Activated CD4-positive, alpha-beta T cell treated with anti-CD3 and anti-CD28 coated beads, Interleukin-2, amount 10 ng/mL, durations not matched to agents 7 days and 5 days (primary cell): ENCODE measurements at regions of chr1 and their contacts with region 1.

Region 1: DNA sequence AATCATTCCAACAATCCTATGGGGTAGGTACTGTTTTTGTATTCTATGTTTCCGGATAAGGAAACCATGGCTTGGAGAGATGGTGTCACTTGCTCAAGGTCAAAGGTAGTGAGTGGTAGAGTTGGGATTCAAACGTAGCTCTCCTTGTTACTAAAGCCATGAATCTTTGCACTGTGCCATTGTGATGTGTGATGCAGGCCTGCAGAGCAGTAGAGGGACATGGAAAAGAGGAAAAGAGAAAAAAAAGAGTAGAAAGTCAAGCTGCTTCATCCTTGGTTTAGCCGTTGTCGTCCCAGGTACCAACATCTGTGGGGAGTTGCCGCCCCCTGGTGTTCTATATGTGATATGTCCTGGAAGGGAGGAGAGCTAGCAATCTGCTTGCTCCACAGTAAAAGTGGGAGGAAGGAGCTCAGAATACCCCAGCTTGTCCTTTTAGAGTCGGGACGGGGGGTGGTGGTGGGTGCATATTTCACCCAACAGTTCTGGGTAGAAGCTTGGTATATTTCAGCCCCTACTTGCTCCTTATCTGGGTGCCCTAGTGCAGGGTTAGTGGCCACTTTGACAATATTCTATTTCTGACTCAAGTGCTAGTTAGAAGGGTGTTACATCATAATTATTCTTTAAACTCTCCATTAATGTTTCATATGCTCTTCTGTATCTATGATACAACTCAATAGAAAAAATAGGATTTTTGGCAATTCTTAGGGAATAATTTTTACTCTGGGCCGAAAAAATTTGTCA is 98.4 kb downstream of the EBNA1BP2 start:
- DNase-seq: peak; percentile 80
- H3K4me3 Mint-ChIP-seq: no peak overlapping the region
- H3K27ac Mint-ChIP-seq: no peak overlapping the region
- H3K4me1 Mint-ChIP-seq: peaks cover 8% of the 10 kb centered on the region
- H3K27me3 Mint-ChIP-seq: no peaks in the 10 kb centered on the region

Region 2: GRCh38 chr1:42756956-42757891 is 316.4 kb before region 1 on chr1:
- CTCF ChIA-PET with region 1: no interaction called
- POLR2A ChIA-PET with region 1: no interaction called
- DNase-seq: peak; percentile 14
- H3K4me3 Mint-ChIP-seq: no peak overlapping the region
- H3K27ac Mint-ChIP-seq: no peak overlapping the region
- H3K4me1 Mint-ChIP-seq: peaks cover 2% of the 10 kb centered on the region
- H3K27me3 Mint-ChIP-seq: no peaks in the 10 kb centered on the region

Region 3: GRCh38 chr1:42913426-42914091 is 160.1 kb before region 1 on chr1:
- CTCF ChIA-PET with region 1: interaction called, 66 read pairs
- POLR2A ChIA-PET with region 1: interaction called, 10 read pairs
- DNase-seq: peak; percentile 86
- H3K4me3 Mint-ChIP-seq: no peak overlapping the region
- H3K27ac Mint-ChIP-seq: no peak overlapping the region
- H3K4me1 Mint-ChIP-seq: peaks cover 6% of the 10 kb centered on the region
- H3K27me3 Mint-ChIP-seq: peaks cover 3% of the 10 kb centered on the region

Region 4: GRCh38 chr1:42924082-42924850 is 149.4 kb before region 1 on chr1:
- CTCF ChIA-PET with region 1: interaction called, 52 read pairs
- POLR2A ChIA-PET with region 1: interaction called, 3 read pairs
- DNase-seq: peak; percentile 93
- H3K4me3 Mint-ChIP-seq: peak overlapping the region; percentile 87
- H3K27ac Mint-ChIP-seq: peak overlapping the region; percentile 96
- H3K4me1 Mint-ChIP-seq: peaks cover 55% of the 10 kb centered on the region
- H3K27me3 Mint-ChIP-seq: no peaks in the 10 kb centered on the region

Region 5: GRCh38 chr1:42931108-42931539 is 142.5 kb before region 1 on chr1:
- CTCF ChIA-PET with region 1: interaction called, 11 read pairs
- POLR2A ChIA-PET with region 1: no interaction called
- DNase-seq: peak; percentile 71
- H3K4me3 Mint-ChIP-seq: peak overlapping the region; percentile 73
- H3K27ac Mint-ChIP-seq: peak overlapping the region; percentile 99
- H3K4me1 Mint-ChIP-seq: peaks cover 91% of the 10 kb centered on the region
- H3K27me3 Mint-ChIP-seq: no peaks in the 10 kb centered on the region

Region 6: DNA sequence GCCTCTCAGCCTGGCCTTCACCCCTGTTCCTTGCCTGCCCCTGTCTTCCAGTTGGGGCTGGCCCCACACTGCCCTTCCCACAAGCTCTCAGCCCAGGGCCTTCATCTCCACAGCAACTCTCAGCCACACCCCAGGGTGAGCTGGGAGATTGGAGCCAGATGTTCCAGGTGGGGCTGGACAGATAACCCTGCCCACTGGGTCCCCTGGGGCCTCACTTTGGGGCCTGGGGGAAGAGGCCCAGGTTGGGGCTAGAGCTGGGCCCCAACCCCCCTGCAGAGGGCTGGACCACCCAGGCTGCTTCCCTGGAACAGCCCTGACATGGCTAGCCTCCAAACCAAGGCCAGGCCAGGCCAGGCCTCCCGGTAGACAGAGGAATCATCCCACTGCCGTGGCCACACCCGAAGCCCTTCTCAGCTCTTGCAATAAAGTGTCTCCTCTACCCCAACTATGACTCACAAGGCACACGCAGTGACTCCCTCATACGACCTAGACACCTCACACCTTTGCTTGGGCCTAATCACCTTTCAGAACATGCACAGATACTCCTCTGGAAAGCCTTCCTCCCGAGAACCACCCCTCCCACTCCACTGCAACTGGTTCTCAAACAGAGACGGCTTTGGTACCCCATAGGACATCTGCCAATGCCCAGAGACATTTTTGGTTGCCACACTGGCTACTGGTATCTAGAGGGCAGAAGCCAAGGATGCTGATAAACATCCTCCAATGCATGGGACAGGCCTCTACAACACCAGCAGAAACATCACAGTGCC is 137.2 kb before region 1 on chr1:
- CTCF ChIA-PET with region 1: interaction called, 11 read pairs
- POLR2A ChIA-PET with region 1: no interaction called
- DNase-seq: no peak
- H3K4me3 Mint-ChIP-seq: no peak overlapping the region
- H3K27ac Mint-ChIP-seq: peak overlapping the region; percentile 99
- H3K4me1 Mint-ChIP-seq: peaks cover 96% of the 10 kb centered on the region
- H3K27me3 Mint-ChIP-seq: no peaks in the 10 kb centered on the region

Region 7: GRCh38 chr1:43098200-43098599 is 24.5 kb after region 1 on chr1:
- CTCF ChIA-PET with region 1: interaction called, 12 read pairs
- POLR2A ChIA-PET with region 1: no interaction called
- DNase-seq: no peak
- H3K4me3 Mint-ChIP-seq: no peak overlapping the region
- H3K27ac Mint-ChIP-seq: no peak overlapping the region
- H3K4me1 Mint-ChIP-seq: no peaks in the 10 kb centered on the region
- H3K27me3 Mint-ChIP-seq: peaks cover 16% of the 10 kb centered on the region

Region 8: GRCh38 chr1:43147553-43148319 is 74.1 kb after region 1 on chr1:
- CTCF ChIA-PET with region 1: no interaction called
- POLR2A ChIA-PET with region 1: no interaction called
- DNase-seq: peak; percentile 51
- H3K4me3 Mint-ChIP-seq: no peak overlapping the region
- H3K27ac Mint-ChIP-seq: no peak overlapping the region
- H3K4me1 Mint-ChIP-seq: peaks cover 1% of the 10 kb centered on the region
- H3K27me3 Mint-ChIP-seq: peaks cover 65% of the 10 kb centered on the region

Region 9: GRCh38 chr1:43184995-43185394 is 111.3 kb after region 1 on chr1:
- CTCF ChIA-PET with region 1: no interaction called
- POLR2A ChIA-PET with region 1: interaction called, 10 read pairs
- DNase-seq: no peak
- H3K4me3 Mint-ChIP-seq: no peak overlapping the region
- H3K27ac Mint-ChIP-seq: no peak overlapping the region
- H3K4me1 Mint-ChIP-seq: no peaks in the 10 kb centered on the region
- H3K27me3 Mint-ChIP-seq: peaks cover 13% of the 10 kb centered on the region